Ovary (tissue), 10 donors: ENCODE measurements at regions of chr15 and their contacts with region 1.

Region 1: DNA sequence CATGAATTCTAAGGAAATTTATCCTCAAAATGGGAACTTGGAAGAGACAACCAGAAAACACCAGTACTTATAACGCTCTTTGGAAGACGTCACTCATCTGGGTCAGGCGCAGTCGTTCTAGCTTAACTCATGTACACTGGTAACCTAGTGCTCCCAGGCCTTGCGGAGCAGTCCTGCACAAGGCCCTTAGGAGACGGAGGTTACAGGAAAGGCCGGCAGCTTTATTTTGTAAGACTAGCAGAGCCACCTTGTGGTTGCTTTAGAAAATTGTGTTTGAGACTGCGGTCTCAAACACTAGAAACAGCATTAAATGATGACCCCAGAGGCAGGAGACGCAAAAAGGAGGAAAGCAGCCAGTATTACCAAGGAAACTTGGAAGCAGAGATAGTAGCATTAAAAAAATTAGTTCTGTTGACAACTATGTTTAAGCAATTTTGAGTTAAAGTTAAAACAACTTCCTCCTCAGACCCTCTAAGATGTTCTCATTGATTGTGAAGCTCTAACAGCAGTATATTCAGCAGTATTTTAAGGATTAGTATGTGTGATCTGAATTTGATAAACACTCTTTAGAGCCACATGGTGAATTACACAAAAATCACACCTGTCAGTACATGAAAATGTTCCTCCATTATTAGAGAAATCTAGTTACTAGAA is 141.9 kb upstream of the C2CD4B start:
- DNase-seq: peak in 3 of 5 donors; percentile 21 to 38 (median 32)
- H3K4me3 ChIP-seq: no peak overlapping the region
- H3K27ac ChIP-seq: no peak overlapping the region
- H3K4me1 ChIP-seq: peaks cover 1% of the 10 kb centered on the region
- H3K27me3 ChIP-seq: no peaks in the 10 kb centered on the region
- CTCF ChIP-seq: peak in 1 of 3 donors; percentile 40
- EP300 ChIP-seq: no peak
- POLR2A ChIP-seq: no peak

Region 2: GRCh38 chr15:61857169-61857829 is 449.7 kb before region 1 on chr15:
- intact Hi-C with region 1: no loop called
- DNase-seq: no peak
- H3K4me3 ChIP-seq: no peak overlapping the region
- H3K27ac ChIP-seq: peak overlapping the region in 1 of 2 donors; percentile 54
- H3K4me1 ChIP-seq: no peaks in the 10 kb centered on the region
- H3K27me3 ChIP-seq: no peaks in the 10 kb centered on the region
- CTCF ChIP-seq: no peak
- EP300 ChIP-seq: no peak
- POLR2A ChIP-seq: no peak

Region 3: DNA sequence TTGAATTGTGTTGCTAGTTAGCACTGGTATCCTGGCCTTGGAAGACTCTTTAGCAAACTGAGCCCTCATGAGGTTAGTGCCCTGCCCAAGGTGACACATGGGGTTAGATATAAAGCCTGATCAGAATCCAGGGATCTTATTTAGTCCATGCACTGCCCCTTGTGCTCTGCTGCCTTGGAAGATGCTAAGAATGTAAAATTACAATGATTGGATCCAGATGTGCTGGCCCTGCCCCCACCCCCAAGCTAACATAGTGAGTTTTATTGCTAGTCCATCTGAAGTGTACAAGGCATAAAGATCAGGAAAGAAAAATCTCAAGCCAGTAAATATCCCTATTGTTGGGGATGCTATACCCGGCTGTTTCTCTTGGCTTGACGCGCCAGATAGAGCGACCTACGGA is 106.2 kb after region 1 on chr15:
- intact Hi-C with region 1: no loop called
- DNase-seq: no peak
- H3K4me3 ChIP-seq: no peak overlapping the region
- H3K27ac ChIP-seq: no peak overlapping the region
- H3K4me1 ChIP-seq: peaks cover 4% of the 10 kb centered on the region
- H3K27me3 ChIP-seq: no peaks in the 10 kb centered on the region
- CTCF ChIP-seq: no peak
- EP300 ChIP-seq: no peak
- POLR2A ChIP-seq: no peak

Region 4: GRCh38 chr15:63019539-63020109 is 712.6 kb after region 1 on chr15:
- intact Hi-C with region 1: loop called in 1 of 4 experiments (anchors 10 kb)
- DNase-seq: peak in 1 of 5 donors; percentile 40
- H3K4me3 ChIP-seq: no peak overlapping the region
- H3K27ac ChIP-seq: no peak overlapping the region
- H3K4me1 ChIP-seq: peaks cover 5% of the 10 kb centered on the region
- H3K27me3 ChIP-seq: no peaks in the 10 kb centered on the region
- CTCF ChIP-seq: no peak
- EP300 ChIP-seq: no peak
- POLR2A ChIP-seq: no peak